ENCODE measurements at regions of chr2 and their contacts with region 1.

Region 1: DNA sequence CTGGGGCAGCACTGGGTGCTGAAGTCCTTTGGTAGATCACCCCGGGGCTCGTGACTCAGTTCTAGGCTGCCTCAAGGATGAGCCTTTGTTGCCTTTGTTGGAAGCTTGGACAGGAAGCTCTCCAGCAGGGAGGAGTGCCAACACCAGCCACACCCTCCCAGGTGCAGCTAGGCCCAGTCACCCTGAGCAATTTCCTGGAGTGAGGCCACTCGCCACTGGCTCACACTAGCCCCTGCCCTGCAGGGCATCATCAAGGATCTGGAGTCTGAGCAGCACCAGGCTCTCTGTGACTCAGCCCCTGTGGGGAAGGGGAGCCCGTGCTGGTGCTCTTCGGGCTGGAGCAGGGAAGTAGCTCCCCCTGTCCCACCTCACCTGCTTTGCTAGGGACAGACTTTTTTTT is 6.7 kb upstream of the SDC1 start:
- DNase-seq: peak; percentile 96 to 100
- H3K4me3 ChIP-seq: no peak overlapping the region; the same call in 1 of the 2 replicates
- H3K27ac ChIP-seq: peak overlapping the region; percentile 99
- H3K4me1 ChIP-seq: peaks cover 61% of the 10 kb centered on the region
- H3K27me3 ChIP-seq: no peaks in the 10 kb centered on the region
- CTCF ChIP-seq: no peak

Region 2: DNA sequence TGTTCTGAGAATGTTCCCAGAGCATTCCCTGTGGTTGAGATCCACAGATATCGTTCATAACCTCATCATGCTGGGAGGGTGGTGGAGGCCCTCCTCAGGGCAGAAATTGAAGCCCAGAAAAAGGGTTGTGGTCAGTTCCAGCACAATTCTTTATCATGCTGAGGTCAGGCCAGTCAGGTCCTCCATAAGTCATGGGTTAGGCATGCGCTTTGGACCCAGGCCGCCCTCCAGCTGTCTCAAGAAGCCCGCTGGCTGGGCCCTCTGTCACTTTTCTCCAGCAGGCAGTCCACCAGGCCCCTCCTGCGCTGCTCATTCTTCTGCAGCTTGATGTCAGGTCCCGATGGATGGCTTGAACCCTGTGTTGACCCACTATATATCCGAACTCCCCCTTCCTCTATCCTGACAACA is 1491.2 kb before region 1 on chr2:
- CTCF ChIA-PET with region 1: no interaction called
- POLR2A ChIA-PET with region 1: no interaction called
- intact Hi-C with region 1: no loop called
- DNase-seq: no peak
- H3K4me3 ChIP-seq: no peak overlapping the region
- H3K27ac ChIP-seq: no peak overlapping the region
- H3K4me1 ChIP-seq: no peaks in the 10 kb centered on the region
- H3K27me3 ChIP-seq: no peaks in the 10 kb centered on the region
- CTCF ChIP-seq: no peak

Region 3: DNA sequence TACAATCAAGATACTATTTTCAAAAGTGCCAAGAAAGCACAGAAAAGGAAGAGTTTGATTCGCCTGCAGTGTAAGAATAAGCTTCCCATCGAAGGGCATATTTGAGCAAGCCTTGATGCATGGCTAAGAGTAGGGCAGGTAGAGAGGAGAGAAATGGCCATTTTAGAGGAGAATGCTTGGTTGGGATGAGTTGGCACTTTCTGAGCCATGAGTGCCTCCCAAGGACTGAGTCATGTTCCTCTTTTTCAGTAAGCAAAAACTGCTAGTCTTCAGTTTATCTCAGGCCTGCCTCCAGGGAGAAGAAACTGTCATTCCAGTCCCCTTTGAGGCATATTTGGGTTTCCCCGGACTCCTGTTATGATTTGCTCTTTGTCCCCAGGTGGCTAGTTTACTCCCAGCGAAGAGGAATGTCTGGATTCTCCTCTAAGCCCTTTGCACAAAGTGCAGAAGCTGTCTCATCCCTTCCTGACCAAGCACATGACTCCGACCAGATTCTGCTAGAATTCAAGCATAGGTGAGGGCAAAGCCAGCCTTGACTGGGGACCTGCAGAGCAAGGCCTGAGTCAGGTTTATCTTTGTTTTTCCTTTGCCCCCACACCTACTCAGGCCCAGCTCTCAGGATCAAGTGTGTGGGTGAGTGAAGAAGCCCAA is 445.1 kb before region 1 on chr2:
- CTCF ChIA-PET with region 1: no interaction called
- POLR2A ChIA-PET with region 1: no interaction called
- intact Hi-C with region 1: loop called (anchors 5 kb)
- DNase-seq: peak; percentile 65 to 94
- H3K4me3 ChIP-seq: 0 out of 2 replicates have a peak overlapping the region, but pooled peaks have one; percentile 2
- H3K27ac ChIP-seq: peak overlapping the region; percentile 100
- H3K4me1 ChIP-seq: peaks cover 55% of the 10 kb centered on the region
- H3K27me3 ChIP-seq: no peaks in the 10 kb centered on the region
- CTCF ChIP-seq: no peak

Region 4: DNA sequence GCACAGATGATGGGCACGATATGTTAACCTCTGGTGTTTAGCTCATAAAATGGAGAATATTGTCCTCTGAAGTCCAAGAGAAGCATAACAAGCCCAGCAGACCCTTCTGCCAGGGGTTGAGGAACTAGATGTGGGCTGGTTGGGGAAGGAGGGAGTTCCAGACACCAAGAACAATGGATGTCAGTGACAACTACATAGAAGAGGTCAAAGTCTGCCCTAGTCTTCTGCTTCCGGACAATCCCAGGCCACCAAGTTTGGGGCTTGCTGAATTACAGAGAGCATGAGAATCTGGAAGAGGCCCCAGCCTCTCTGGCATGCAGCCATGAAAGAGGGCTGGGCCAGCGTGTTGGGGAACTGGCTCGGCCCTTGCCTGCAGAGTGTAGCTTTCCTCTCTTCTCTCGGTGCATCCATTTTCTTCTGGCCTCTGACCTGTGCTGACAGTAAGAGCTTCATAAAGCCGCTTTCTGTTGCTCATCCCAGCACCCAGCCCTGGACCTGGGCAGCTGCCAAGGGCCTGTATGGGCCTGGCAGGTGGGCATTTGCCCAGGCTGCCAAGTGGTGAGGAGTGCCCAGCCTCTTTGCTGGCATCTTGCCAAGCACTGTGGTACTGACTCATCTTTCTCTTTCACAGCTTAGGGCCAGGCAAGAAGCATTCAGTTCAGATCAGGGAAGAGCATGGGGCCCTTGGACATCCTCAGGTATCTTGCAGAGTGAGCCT is 165.6 kb before region 1 on chr2:
- CTCF ChIA-PET with region 1: no interaction called
- POLR2A ChIA-PET with region 1: interaction called, 21 read pairs
- intact Hi-C with region 1: no loop called
- DNase-seq: peak; percentile 80 to 90
- H3K4me3 ChIP-seq: no peak overlapping the region
- H3K27ac ChIP-seq: peak overlapping the region; percentile 88
- H3K4me1 ChIP-seq: peaks cover 64% of the 10 kb centered on the region
- H3K27me3 ChIP-seq: no peaks in the 10 kb centered on the region
- CTCF ChIP-seq: no peak

Region 5: DNA sequence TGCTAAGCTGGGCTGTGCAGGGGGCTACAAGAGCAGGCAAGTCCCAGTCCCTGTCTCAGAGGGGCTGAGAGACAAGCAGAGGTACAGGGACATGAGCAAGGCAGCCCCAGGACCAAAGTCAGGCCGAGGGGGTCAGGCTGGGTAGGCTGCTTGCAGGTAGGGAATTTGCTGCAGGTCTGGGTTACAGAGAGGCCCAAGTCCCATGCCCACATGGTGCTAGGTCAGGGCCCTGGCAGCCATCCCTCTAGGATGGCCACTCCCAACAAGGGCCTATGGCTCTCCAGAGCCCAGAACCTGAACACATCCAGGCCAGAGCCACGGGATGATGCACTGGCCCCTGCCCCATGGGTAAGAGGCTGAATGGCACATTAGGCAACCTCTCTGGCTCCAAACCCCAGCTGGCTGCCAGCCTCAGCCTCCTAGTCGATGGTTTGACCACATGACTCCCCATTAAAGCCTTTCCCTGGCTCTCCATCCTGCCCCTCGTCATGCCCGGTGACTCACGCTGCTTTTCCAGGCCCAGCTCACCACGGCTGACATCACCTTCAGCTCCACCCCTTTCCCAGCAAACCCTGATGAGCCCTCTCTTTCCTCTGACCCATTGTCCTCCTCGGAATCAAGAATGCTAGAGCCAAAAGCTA is 90.4 kb before region 1 on chr2:
- CTCF ChIA-PET with region 1: no interaction called
- POLR2A ChIA-PET with region 1: interaction called, 6 read pairs
- intact Hi-C with region 1: loop called (anchors 1 kb)
- DNase-seq: peak; percentile 72 to 87
- H3K4me3 ChIP-seq: no peak overlapping the region
- H3K27ac ChIP-seq: peak overlapping the region; percentile 61
- H3K4me1 ChIP-seq: peaks cover 74% of the 10 kb centered on the region
- H3K27me3 ChIP-seq: no peaks in the 10 kb centered on the region
- CTCF ChIP-seq: no peak

Region 6: DNA sequence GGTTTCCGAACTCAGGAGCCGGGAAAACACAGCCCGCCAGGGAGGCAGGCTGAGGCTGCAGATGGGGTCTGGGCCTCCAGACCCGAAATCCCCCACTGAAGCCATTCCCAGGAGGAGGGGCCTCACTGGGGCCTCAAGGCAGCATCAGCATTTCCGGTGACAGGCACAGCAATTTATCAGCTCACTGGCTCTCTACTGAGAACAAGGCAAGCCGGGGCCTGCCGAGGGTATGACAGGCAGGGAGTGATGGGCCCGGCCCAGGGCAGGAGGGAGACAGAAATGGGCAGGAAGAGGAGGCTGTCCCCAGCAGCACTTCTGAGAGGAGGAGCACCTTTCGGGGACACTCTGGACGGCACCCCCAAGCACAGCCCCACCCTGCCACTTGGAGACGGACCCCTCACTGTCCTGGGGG is 19.2 kb before region 1 on chr2:
- CTCF ChIA-PET with region 1: interaction called, 10 read pairs
- POLR2A ChIA-PET with region 1: interaction called, 3 read pairs
- intact Hi-C with region 1: no loop called
- DNase-seq: no peak
- H3K4me3 ChIP-seq: no peak overlapping the region
- H3K27ac ChIP-seq: no peak overlapping the region
- H3K4me1 ChIP-seq: peaks cover 20% of the 10 kb centered on the region
- H3K27me3 ChIP-seq: no peaks in the 10 kb centered on the region
- CTCF ChIP-seq: no peak

Region 7: GRCh38 chr2:20291106-20291564 is 59.5 kb after region 1 on chr2:
- CTCF ChIA-PET with region 1: interaction called, 3 read pairs
- POLR2A ChIA-PET with region 1: interaction called, 6 read pairs
- intact Hi-C with region 1: loop called (anchors 2 kb)
- DNase-seq: peak; percentile 57 to 77
- H3K4me3 ChIP-seq: no peak overlapping the region
- H3K27ac ChIP-seq: peak overlapping the region; percentile 32
- H3K4me1 ChIP-seq: peaks cover 29% of the 10 kb centered on the region
- H3K27me3 ChIP-seq: no peaks in the 10 kb centered on the region
- CTCF ChIP-seq: peak; percentile 83

Region 8: DNA sequence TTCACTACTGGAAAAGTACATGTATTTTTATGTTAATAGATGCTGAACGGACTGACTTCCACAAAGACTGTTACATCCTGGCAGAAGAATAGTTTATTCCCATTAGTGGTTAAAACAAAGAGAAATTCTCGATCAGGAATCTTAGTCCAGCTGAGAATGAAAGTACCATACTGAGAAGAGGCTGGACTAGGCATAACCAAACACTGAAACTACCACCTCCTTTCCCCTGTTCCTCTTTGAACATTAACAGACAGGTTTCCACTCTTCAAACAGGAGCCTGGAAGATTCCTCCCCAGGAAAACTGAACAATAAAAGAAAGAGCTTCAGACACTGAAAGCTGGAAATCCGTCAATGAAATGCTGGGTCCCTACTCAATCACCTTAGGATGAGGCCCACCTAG is 565.5 kb after region 1 on chr2:
- CTCF ChIA-PET with region 1: no interaction called
- POLR2A ChIA-PET with region 1: no interaction called
- intact Hi-C with region 1: no loop called
- DNase-seq: no peak
- H3K4me3 ChIP-seq: no peak overlapping the region
- H3K27ac ChIP-seq: peak overlapping the region; percentile 70
- H3K4me1 ChIP-seq: peaks cover 21% of the 10 kb centered on the region
- H3K27me3 ChIP-seq: no peaks in the 10 kb centered on the region
- CTCF ChIP-seq: no peak